PC-9 (cell line): ENCODE measurements at regions of chr17 and their contacts with region 1.

Region 1: GRCh38 chr17:77254951-77255825 is 114.4 kb downstream of the SEC14L1 start:
- DNase-seq: peak; percentile 95 to 97
- H3K4me3 ChIP-seq: peak overlapping the region; percentile 92; the same call in 1 of the 2 replicates
- H3K27ac ChIP-seq: peak overlapping the region; percentile 100
- H3K4me1 ChIP-seq: peaks cover 23% of the 10 kb centered on the region
- H3K27me3 ChIP-seq: no peaks in the 10 kb centered on the region
- CTCF ChIP-seq: 0 out of 2 replicates have a peak, but pooled peaks have one; percentile 3

Region 2: GRCh38 chr17:77088455-77089123 is 166.6 kb before region 1 on chr17:
- CTCF ChIA-PET with region 1: interaction called, 14 read pairs
- POLR2A ChIA-PET with region 1: interaction called, 10 read pairs
- intact Hi-C with region 1: no loop called
- DNase-seq: peak; percentile 85 to 88
- H3K4me3 ChIP-seq: peak overlapping the region; percentile 81
- H3K27ac ChIP-seq: peak overlapping the region; percentile 72
- H3K4me1 ChIP-seq: peaks cover 4% of the 10 kb centered on the region; the same call in 1 of the 2 replicates
- H3K27me3 ChIP-seq: no peaks in the 10 kb centered on the region
- CTCF ChIP-seq: peak; percentile 50; the same call in 1 of the 2 replicates

Region 3: DNA sequence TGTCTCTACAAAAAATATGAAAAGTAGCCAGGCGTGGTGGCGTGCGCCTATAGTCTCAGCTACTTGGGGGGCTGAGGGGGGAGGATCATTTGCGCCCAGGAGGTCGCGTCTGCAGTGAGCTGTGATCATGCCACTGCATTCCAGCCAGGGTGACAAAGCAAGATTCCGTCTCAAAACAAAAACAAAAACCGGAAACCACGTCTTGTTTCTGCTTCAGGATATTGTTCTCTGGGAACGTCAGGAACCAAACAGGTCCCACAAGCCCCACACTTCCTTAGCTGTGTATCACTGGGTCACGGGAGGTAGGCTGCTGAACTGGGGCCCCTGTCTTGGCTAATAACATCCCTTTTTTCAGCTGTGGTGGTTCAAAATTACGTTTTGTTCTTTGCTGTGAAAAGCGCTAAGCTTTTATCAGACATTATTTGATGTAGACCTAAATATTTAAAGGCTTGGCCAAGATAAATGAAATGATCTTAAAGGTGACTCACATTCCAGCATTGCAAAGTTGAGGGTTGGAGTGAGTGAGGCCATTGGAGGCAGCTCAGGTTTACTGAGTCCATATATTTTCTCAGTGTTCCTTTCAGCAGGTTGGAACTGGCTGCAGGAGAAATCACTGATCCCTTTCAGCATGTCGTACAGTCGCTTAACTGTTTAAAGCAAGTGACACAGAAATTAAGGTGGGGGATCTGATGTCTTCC is 130.8 kb before region 1 on chr17:
- CTCF ChIA-PET with region 1: no interaction called
- POLR2A ChIA-PET with region 1: interaction called, 19 read pairs
- intact Hi-C with region 1: no loop called
- DNase-seq: peak; percentile 69 to 87
- H3K4me3 ChIP-seq: peak overlapping the region; percentile 25; the same call in 1 of the 2 replicates
- H3K27ac ChIP-seq: peak overlapping the region; percentile 98
- H3K4me1 ChIP-seq: peaks cover 54% of the 10 kb centered on the region
- H3K27me3 ChIP-seq: no peaks in the 10 kb centered on the region
- CTCF ChIP-seq: no peak

Region 4: GRCh38 chr17:77280980-77281903 is 26.1 kb after region 1 on chr17:
- CTCF ChIA-PET with region 1: interaction called, 6 read pairs
- POLR2A ChIA-PET with region 1: interaction called, 12 read pairs
- intact Hi-C with region 1: loop called (anchors 1 kb)
- DNase-seq: peak; percentile 36 to 70
- H3K4me3 ChIP-seq: peak overlapping the region; percentile 90
- H3K27ac ChIP-seq: peak overlapping the region; percentile 65
- H3K4me1 ChIP-seq: peaks cover 49% of the 10 kb centered on the region
- H3K27me3 ChIP-seq: no peaks in the 10 kb centered on the region
- CTCF ChIP-seq: no peak

Region 5: DNA sequence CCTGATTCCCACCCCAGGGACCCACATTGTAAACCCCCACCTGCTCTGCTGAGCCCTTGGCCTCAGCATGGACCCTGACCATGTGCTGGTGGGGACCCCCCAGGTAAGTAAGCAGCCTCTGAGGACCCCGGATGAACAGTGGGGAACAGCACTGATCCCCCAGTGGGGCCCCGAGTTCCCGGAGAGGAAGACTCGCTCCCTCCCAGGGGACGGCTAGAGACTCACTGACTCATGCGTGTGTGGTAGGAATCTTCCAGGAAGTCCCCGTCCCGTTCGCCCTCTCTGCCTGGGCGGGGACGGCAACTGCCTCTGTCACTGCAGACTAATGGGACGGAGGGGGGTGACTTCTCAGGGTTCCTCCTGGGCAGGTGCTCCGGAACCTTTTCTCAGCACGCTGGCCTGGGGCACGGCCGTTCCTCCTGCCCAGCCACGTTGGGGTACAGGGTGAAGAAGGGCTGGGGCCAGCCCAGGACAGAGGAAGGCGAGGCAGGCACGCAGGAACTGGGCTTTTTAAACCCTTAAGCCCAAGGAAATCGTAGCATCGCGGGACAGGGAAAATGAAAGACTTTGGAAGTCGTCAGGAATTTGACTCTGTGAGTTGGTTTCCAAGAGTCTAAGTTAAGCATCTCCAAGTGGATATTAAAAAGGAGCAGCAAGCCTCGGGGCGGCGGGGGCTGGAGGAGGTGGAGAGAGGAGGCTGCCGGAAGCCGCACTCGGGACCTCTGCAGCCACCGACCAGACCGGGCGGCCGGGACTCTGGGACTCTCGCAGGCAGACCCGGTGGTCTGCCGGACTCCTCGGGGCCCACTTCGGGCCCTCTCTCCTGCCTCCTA is 64.2 kb after region 1 on chr17:
- CTCF ChIA-PET with region 1: no interaction called
- POLR2A ChIA-PET with region 1: no interaction called
- intact Hi-C with region 1: loop called (anchors 1 kb)
- DNase-seq: peak; percentile 83 to 88
- H3K4me3 ChIP-seq: peak overlapping the region; percentile 82
- H3K27ac ChIP-seq: peak overlapping the region; percentile 95
- H3K4me1 ChIP-seq: peaks cover 25% of the 10 kb centered on the region
- H3K27me3 ChIP-seq: no peaks in the 10 kb centered on the region
- CTCF ChIP-seq: no peak

Region 6: DNA sequence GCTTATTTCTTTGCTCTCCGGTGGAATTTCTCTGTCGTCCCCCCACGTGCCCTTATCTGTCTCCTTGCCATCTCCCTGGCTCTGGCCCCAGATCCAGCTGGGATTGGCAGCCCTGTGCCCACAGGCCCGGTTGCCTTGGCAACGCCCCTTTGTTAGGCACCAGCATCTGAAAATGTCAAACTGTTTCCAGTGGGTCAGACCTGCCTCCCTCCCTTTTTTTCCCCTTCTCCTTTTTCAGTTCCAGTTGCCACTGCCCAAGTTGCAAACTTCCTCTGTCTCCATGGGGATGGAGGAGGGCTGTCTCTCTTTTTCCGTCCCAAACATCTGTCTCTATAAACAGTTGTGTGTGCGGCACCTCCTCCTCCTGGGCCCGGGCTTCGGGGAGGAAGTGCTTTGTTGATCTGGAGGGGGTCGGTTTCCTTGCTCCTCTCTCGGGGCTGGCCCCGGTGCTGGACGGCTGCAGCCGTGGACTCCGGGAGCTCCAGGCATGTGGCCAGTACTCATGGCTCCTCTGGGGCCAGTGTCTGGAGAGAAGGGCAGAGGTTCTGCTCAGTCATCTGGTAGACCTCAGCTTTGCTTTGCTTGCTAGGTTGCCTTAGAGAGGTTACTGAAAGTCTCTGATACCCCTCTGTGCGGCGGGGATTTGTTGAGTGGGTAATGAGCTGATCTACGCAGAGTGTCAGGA is 1069.3 kb after region 1 on chr17:
- CTCF ChIA-PET with region 1: no interaction called
- POLR2A ChIA-PET with region 1: interaction called, 16 read pairs
- intact Hi-C with region 1: no loop called
- DNase-seq: no peak
- H3K4me3 ChIP-seq: no peak overlapping the region
- H3K27ac ChIP-seq: no peak overlapping the region
- H3K4me1 ChIP-seq: peaks cover 16% of the 10 kb centered on the region
- H3K27me3 ChIP-seq: no peaks in the 10 kb centered on the region
- CTCF ChIP-seq: no peak